ENCODE measurements at regions of chr12 and their contacts with region 1.

Region 1: DNA sequence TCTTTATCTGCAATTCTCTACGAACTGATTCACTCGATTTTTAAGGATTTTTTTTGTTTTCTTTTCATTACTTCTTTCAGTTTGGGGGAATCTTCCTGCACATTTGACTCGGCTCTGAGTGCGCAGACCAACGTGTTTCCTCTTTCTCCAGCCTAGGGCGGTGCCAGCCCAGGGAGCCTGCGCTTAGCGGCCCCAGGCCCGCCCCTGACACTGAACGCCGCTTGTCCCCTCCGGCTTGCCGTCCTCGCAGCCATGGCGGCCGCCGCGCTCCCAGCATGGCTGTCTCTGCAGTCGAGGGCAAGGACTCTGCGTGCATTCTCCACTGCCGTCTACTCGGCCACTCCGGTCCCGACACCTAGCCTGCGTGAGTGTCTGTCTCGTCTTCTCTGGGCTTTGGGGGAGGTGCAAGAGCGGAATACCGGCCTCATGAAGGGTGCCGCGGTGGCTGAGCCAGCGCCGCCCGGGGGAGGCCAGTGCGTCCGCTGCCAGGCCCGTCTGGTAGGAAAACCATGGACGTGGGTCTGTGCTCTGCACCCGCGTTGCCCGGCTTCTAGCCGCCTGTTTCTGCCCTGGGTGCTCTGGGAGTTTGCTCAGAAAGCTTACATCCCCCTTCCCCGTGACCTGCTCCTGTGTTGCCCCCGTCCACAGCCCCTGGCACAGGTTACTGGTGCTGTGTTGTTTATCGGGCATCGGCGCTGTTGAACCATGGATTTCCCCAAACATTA is at the start of gene MRPS35:
- DNase-seq: peak; percentile 92
- ATAC-seq: peak; percentile 99
- H3K4me3 Mint-ChIP-seq: peak within 1 kb of the TSS; percentile 99
- H3K27ac Mint-ChIP-seq: peak within 1 kb of the TSS; percentile 99
- H3K4me1 Mint-ChIP-seq: peaks cover 29% of the 10 kb centered on the region
- H3K27me3 Mint-ChIP-seq: no peaks in the 10 kb centered on the region
- CTCF ChIP-seq: no peak
- total RNA-seq, gene MRPS35: 36.2 and 36.8 TPM in 2 replicates

Region 2: DNA sequence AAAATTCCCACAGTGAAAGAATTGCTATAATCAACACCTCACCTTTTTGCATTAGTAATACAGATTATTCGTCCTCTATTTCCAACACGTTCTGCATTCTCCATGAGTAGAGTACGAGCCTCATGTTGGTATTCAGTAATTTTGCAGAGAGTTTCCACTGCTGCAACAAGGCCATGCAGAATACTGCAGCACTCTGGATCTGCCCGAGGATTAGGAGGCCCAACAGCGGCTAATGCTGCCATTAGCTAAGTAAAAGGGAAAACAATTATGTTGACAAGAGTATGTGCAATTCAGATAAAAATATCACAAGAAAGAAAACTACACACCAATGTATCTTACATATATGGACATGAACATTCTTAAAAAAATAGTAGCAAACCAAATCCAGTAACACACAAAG is 782.1 kb before region 1 on chr12:
- CTCF ChIA-PET with region 1: no interaction called
- POLR2A ChIA-PET with region 1: no interaction called
- intact Hi-C with region 1: no loop called
- DNase-seq: no peak
- ATAC-seq: no peak
- H3K4me3 Mint-ChIP-seq: no peak overlapping the region
- H3K27ac Mint-ChIP-seq: no peak overlapping the region
- H3K4me1 Mint-ChIP-seq: peaks cover 3% of the 10 kb centered on the region
- H3K27me3 Mint-ChIP-seq: no peaks in the 10 kb centered on the region
- CTCF ChIP-seq: no peak

Region 3: DNA sequence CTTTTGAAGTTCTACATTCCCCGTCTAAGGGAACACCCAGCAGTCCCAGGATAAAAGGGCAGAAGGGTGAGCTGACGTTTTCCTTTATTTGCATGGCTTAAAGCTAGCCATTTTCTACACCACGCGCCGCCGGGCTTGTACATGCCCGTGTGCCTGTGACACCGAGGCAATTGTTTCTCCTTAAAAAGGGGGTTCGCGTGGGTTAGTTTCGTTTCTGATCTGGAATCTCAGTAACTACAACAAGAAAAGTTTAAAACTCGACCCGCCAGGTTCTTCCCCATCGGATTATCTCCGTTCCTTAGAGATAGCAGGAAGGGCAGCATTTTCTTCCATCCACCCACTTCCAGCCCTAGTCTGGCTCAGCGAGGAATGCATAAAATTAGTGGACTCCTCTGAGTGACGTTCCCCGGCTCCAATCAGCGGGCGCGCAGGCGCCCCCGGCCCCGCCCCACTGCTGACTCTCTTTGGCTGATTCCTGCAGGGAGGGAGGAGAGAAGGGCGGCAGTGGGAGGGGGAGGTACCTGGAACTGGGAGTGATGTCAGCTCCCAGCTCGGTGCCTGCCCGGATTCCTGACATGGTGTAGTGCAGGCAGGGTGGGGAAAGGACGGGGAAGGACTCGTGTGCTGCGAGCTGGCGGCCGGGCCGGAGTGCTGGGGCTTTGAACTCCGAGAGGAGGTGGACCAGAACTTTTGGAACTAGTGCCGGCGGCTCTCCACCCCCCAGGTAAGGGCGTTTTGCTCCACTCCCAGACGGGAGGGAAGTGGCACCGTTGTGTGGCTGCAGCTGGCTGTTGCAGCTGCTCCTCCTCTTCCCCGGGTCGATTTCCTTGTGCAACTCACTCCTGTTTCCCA is 186.9 kb before region 1 on chr12 and contains the start of gene PPFIBP1:
- CTCF ChIA-PET with region 1: no interaction called
- POLR2A ChIA-PET with region 1: interaction called, 3 read pairs
- intact Hi-C with region 1: loop called (anchors 5 kb)
- DNase-seq: peak; percentile 81
- ATAC-seq: peak; percentile 98
- H3K4me3 Mint-ChIP-seq: peak within 1 kb of the TSS; percentile 96
- H3K27ac Mint-ChIP-seq: peak within 1 kb of the TSS; percentile 93
- H3K4me1 Mint-ChIP-seq: peaks cover 23% of the 10 kb centered on the region
- H3K27me3 Mint-ChIP-seq: peaks cover 3% of the 10 kb centered on the region
- CTCF ChIP-seq: no peak
- total RNA-seq, gene PPFIBP1: 7.2 and 8.1 TPM in 2 replicates

Region 4: GRCh38 chr12:27821259-27821973 is 110.7 kb after region 1 on chr12:
- CTCF ChIA-PET with region 1: no interaction called
- POLR2A ChIA-PET with region 1: no interaction called
- intact Hi-C with region 1: loop called (anchors 2 kb)
- DNase-seq: peak; percentile 24
- ATAC-seq: peak; percentile 25
- H3K4me3 Mint-ChIP-seq: peak overlapping the region; percentile 66
- H3K27ac Mint-ChIP-seq: peak overlapping the region; percentile 73
- H3K4me1 Mint-ChIP-seq: peaks cover 38% of the 10 kb centered on the region
- H3K27me3 Mint-ChIP-seq: peaks cover 2% of the 10 kb centered on the region
- CTCF ChIP-seq: peak; percentile 43

Region 5: DNA sequence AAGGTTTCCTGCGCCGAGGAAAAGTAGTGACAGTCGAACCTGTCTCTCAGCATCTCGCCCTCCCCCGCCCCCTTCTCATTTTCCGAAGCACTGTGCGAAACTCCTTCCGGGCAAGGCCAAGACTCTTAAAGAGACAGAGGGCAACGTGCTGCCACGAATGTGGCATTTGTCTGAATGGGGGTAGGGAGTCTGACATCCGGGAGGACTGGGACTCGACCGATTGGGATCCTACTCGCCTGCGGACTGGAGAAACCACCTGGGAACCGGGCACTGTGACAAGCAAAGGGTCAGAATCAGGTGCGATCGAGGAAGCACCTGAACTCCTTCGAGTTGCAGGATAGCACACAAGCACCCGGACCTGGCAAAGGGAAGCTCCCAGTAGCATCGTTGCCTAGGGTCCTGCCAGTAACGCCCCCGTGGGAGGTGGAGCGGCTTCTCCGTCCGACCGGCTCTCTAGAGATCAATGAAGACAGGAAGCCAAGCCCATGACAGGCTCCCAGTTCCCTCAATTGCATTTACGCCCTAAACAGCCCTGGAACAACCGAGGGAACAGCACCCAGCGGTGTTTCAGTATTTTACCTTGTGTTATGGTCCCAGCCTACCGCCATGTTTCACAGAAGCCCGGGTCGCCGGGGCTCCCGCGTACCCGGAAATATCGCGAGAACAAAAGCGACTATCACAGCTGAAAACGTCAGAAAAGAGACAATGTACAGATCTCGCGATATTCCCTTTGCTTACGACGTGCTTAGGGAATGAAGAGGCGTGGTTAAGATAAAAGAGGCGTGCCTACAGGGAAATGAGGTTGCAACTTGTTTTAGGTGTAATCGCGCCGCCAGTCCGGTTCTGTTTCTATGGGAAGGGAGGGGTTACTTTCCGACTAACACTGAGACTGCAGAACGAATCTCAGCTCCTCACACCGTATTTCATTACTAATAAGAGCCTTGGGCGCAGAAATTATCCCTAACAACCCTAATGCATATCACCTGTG is 1670.1 kb after region 1 on chr12 and contains the start of gene ERGIC2:
- CTCF ChIA-PET with region 1: no interaction called
- POLR2A ChIA-PET with region 1: no interaction called
- intact Hi-C with region 1: loop called (anchors 2 kb)
- DNase-seq: peak; percentile 73
- ATAC-seq: peak; percentile 94
- H3K4me3 Mint-ChIP-seq: peak within 1 kb of the TSS; percentile 94
- H3K27ac Mint-ChIP-seq: peak within 1 kb of the TSS; percentile 94
- H3K4me1 Mint-ChIP-seq: peaks cover 42% of the 10 kb centered on the region
- H3K27me3 Mint-ChIP-seq: no peaks in the 10 kb centered on the region
- CTCF ChIP-seq: no peak
- total RNA-seq, gene ERGIC2: 43.7 TPM in 2 replicates

Measured in activated B cell treated with CpG ODN at 0.5 μM for 24 hours (primary cell).